Prostate gland (tissue), 2 donors: ENCODE measurements at regions of chr4 and their contacts with region 1.

Region 1: DNA sequence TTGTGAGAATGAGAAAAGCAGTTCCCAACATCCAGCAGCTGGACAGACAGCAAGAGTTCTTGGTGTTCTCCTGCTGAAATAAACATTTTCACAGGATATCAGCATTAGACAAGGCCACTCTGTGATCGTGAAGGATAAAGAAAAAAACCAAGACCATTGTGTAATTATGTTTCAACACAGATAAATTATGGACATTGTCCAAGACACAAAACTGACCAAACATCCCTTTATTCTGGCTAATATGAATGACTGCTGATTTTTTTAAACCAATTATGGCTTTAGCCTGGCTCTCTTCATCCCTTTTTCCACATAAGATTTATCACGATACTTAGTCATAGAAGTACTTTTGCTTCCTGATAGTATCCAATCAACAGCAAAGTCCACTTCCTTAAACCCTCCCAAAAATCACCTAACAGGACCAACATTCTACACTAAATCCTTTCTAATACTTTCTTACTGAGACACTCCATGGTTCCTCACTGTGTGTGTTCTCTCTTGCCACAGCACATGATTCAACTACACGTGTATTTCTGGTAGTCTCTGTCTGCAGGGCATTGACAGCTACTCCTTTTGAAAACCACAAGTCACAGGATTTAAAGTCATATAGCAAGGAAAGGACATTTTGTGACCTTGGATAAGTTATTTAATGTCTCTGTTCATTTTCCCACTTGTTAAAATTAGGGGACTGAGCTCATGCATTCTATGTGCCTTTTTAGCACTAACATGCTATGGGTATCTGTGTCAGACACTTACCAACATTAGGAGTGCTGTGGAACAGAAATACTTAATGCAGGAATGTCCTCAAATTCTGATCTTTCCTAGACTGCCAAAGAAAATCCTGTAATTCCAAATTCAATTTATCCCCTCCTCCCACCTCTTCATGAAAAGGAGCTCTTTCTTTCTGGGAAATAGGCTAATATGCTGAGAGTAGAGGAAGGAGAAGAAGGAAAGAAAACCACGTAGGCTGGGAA is 137.2 kb upstream of the PGRMC2 start:
- DNase-seq: no peak
- H3K4me3 ChIP-seq: no peak overlapping the region
- H3K27ac ChIP-seq: no peak overlapping the region
- H3K4me1 ChIP-seq: no peaks in the 10 kb centered on the region
- H3K27me3 ChIP-seq: no peaks in the 10 kb centered on the region
- CTCF ChIP-seq: no peak
- POLR2A ChIP-seq: no peak

Region 2: DNA sequence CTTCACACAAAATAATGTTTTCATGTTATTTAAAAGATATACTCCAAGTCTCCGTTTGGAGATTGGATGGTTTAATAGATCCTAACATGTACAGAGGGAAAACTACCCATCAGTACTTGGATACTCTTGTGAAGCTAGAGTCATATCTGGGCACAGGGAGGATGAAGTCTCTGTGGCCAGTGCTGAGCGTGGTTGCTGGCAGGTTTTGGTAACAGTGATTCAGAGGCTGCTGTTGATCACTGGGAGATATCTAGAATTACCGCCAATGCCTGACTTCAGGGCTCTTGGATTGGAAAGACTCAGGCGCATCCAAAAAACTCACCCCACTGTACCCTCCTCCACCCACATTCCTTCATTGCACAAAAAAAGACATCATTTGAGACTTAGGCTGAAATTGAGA is 30.0 kb before region 1 on chr4:
- intact Hi-C with region 1: loop called (anchors 2 kb)
- DNase-seq: no peak
- H3K4me3 ChIP-seq: no peak overlapping the region
- H3K27ac ChIP-seq: peak overlapping the region in 1 of 2 donors; percentile 4
- H3K4me1 ChIP-seq: no peaks in the 10 kb centered on the region
- H3K27me3 ChIP-seq: no peaks in the 10 kb centered on the region
- CTCF ChIP-seq: no peak
- POLR2A ChIP-seq: no peak

Region 3: DNA sequence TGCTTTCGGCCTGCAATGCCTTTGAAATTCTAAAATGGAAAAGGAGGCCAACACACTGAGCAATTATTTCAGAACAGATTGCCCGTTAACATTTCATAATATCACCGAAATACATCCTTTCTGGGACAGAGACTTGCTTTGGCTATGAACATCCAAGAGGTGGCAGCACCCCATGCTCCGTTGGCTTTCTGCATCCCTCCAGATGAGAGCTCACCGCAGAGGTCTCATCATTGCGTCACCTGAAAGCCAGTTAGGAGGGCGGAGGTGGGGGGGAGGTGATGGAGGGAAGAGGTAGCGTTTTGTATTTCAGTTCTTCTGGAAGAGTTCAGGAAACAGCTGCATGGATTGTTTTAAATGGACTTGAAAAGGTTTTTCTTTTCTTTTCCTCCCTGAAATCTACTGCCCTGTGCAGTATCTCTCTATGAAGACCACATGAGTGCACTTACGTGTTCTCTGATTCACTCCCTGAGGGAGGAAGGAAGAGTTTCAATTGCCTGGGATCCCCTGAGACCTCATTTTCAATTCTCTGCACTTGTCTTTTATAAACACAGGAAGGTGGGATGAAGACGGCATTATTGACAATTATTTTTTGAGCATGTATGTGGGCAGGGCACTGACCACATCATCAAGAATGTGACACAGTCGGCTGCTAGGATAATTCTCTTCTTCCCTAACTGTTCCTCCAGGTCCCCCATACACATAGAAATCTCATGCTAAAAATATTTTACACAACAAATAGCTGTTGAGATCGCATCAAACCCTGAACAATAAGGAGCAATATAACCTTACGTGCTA is 29.7 kb after region 1 on chr4:
- intact Hi-C with region 1: no loop called
- DNase-seq: peak; percentile 78
- H3K4me3 ChIP-seq: no peak overlapping the region
- H3K27ac ChIP-seq: no peak overlapping the region
- H3K4me1 ChIP-seq: no peaks in the 10 kb centered on the region
- H3K27me3 ChIP-seq: no peaks in the 10 kb centered on the region
- CTCF ChIP-seq: peak; percentile 35 to 84 (median 71)
- POLR2A ChIP-seq: no peak